A673 (cell line): ENCODE measurements at regions of chr10 and their contacts with region 1.

Region 1: DNA sequence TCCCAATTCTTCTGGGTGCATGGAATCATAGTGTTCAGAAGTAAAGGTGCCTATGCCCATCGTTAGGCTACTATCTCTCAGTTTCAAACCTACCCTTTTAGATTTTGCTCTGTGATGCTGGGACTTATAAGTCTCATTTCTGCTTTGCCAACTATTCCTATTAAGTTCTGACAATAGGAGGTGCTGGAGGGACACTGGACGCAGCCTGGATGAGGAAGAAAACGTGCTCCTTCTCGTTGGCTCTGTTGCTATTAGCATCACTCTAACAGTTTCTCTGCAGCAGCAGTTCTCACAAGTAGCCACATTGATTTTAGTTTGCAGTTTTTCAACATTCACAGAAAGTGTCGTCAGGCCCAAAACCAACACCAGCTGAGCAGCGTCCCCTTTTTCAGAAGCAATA is 72.4 kb downstream of the ABCC2 start:
- DNase-seq: peak; percentile 83
- H3K4me3 ChIP-seq: no peak overlapping the region
- H3K27ac ChIP-seq: no peak overlapping the region
- H3K4me1 ChIP-seq: peaks cover 13% of the 10 kb centered on the region
- H3K27me3 ChIP-seq: no peaks in the 10 kb centered on the region
- CTCF ChIP-seq: peak; percentile 71

Region 2: GRCh38 chr10:98460837-98461499 is 1393.9 kb before region 1 on chr10:
- CTCF ChIA-PET with region 1: no interaction called
- POLR2A ChIA-PET with region 1: no interaction called
- intact Hi-C with region 1: no loop called
- DNase-seq: peak; percentile 15
- H3K4me3 ChIP-seq: no peak overlapping the region
- H3K27ac ChIP-seq: no peak overlapping the region
- H3K4me1 ChIP-seq: no peaks in the 10 kb centered on the region
- H3K27me3 ChIP-seq: peaks cover 24% of the 10 kb centered on the region
- CTCF ChIP-seq: no peak

Region 3: DNA sequence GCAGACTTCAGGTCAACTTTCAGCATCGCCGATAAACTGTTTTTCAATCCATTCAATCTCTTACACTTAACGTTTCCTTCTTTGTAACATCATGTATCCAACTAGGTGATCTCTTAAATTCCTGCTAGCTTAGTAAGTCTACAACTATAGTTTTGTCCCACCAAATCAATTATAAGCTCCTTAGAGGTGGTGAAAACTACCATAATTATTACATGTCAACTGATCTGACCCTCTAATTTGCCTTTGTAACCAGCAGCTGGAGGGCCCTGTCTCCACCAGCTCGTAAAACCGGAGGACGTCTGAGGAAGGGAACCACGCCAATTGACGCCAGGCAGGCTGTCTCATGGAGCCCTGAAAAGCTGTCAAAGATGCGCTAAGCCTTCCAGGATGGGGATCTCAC is 41.0 kb after region 1 on chr10:
- CTCF ChIA-PET with region 1: no interaction called
- POLR2A ChIA-PET with region 1: no interaction called
- intact Hi-C with region 1: no loop called
- DNase-seq: peak; percentile 27
- H3K4me3 ChIP-seq: no peak overlapping the region
- H3K27ac ChIP-seq: no peak overlapping the region
- H3K4me1 ChIP-seq: peaks cover 7% of the 10 kb centered on the region
- H3K27me3 ChIP-seq: no peaks in the 10 kb centered on the region
- CTCF ChIP-seq: no peak

Region 4: GRCh38 chr10:100046021-100046486 is 191.2 kb after region 1 on chr10:
- CTCF ChIA-PET with region 1: interaction called, 4 read pairs
- POLR2A ChIA-PET with region 1: no interaction called
- intact Hi-C with region 1: loop called (anchors 2 kb)
- DNase-seq: peak; percentile 92
- H3K4me3 ChIP-seq: no peak overlapping the region
- H3K27ac ChIP-seq: no peak overlapping the region
- H3K4me1 ChIP-seq: peaks cover 27% of the 10 kb centered on the region
- H3K27me3 ChIP-seq: no peaks in the 10 kb centered on the region
- CTCF ChIP-seq: peak; percentile 94